ENCODE measurements at regions of chr1 and their contacts with region 1.

Region 1: DNA sequence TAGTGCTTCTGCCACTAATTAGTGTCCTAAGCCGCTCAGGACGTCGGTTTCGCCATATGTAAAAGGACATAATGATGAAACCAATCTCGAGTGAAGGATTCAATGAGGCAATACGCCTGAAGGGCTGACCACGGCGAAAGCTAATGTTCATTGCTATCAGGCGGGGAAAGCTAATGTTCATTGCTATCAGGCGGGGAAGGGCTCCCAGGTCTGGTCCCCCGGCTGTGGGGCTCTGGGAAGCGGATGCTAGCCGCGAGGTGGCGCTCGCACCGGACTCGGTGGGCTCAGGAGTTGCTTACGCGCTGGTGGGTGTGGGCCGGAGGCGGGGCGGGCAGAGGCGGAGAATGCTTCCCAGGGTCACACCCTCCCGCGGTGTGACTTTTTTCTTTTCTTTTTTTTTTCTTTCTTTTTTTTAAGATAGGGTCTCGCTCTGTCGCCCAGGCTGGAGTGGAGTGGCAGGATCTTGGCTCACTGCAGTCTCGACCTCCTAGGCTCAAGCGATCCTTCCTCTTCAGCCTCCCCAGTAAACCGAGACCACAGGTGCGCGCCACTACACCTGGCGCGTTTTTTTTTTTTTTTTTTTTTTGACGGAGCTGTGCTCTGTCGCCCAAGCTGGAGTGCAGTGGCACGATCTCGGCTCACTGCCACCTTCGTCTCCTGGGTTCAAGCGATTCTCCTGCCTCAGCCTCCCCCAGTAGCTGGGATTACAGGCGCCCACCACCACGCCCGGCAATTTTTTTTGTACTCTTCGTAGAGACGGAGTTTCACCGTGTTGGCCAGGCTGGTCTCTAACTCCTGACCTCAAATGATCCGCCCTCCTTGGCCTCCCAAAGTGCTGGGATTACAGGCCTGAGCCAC is 1.1 kb upstream of the PEAR1 start:
- DNase-seq: peak; percentile 91 to 96 (median 93)
- H3K4me3 ChIP-seq: peak overlapping the region in 5 of 7 experiments; percentile 38 to 78 (median 66)
- H3K27ac ChIP-seq: peak overlapping the region in 1 of 2 experiments; percentile 62
- H3K4me1 ChIP-seq: peaks cover 6 to 44% (median 42%) of the 10 kb centered on the region in 4 experiments
- H3K27me3 ChIP-seq: peaks cover 0 to 20% (median 9%) of the 10 kb centered on the region in 5 experiments

Region 2: DNA sequence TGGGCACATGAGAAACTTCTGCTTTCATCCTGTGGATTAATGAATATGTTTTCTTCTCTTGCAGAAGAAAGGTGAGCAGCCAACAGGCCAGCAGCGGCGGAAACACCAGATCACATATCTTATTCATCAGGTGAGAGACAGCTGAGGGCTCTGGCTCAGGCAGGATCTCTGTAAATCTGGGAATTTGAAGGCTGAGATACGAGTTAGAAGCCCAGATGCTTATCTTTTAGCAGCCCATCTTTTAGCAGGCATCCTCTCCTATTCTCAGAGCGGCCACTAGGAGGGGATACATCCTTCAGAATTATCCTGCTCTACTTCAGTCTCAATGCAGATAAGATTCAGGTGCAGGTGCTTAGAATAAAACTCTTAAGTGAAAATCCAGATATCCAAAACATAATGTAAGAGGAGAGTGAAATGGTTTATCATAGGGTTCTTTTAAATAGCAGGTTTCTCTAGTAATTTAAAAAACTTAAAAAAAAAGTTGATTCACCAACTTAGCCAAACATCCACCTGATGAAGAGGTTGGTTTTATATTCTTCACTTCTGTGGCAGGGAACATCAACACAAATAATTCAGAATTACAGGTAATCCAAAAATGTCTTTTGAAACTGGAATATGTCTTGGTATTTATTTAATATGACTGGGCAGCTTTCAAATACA is 95.1 kb before region 1 on chr1:
- CTCF ChIA-PET with region 1: interaction called, 104 read pairs
- POLR2A ChIA-PET with region 1: no interaction called
- DNase-seq: peak; percentile 68 to 77 (median 76)
- H3K4me3 ChIP-seq: no peak overlapping the region
- H3K27ac ChIP-seq: no peak overlapping the region
- H3K4me1 ChIP-seq: peaks cover 0 to 7% (median 5%) of the 10 kb centered on the region in 4 experiments
- H3K27me3 ChIP-seq: no peaks in the 10 kb centered on the region

Region 3: GRCh38 chr1:156860113-156860627 is 32.2 kb before region 1 on chr1:
- CTCF ChIA-PET with region 1: interaction called, 61 read pairs
- POLR2A ChIA-PET with region 1: no interaction called
- DNase-seq: peak; percentile 31 to 61 (median 57)
- H3K4me3 ChIP-seq: peak overlapping the region; percentile 22 to 69 (median 54)
- H3K27ac ChIP-seq: no peak overlapping the region
- H3K4me1 ChIP-seq: peaks cover 2 to 43% (median 39%) of the 10 kb centered on the region in 4 experiments
- H3K27me3 ChIP-seq: peaks cover 0 to 78% (median 47%) of the 10 kb centered on the region in 5 experiments

Region 4: GRCh38 chr1:156876281-156876680 is 16.1 kb before region 1 on chr1:
- CTCF ChIA-PET with region 1: interaction called, 75 read pairs
- POLR2A ChIA-PET with region 1: no interaction called
- DNase-seq: no peak
- H3K4me3 ChIP-seq: no peak overlapping the region
- H3K27ac ChIP-seq: no peak overlapping the region
- H3K4me1 ChIP-seq: no peaks in the 10 kb centered on the region
- H3K27me3 ChIP-seq: peaks cover 0 to 29% (median 10%) of the 10 kb centered on the region in 5 experiments

Region 5: GRCh38 chr1:156927215-156928042 is 35.0 kb after region 1 on chr1:
- CTCF ChIA-PET with region 1: interaction called, 201 read pairs
- POLR2A ChIA-PET with region 1: interaction called, 4 read pairs
- DNase-seq: peak; percentile 77 to 82 (median 81)
- H3K4me3 ChIP-seq: peak overlapping the region in 5 of 7 experiments; percentile 9 to 71 (median 53)
- H3K27ac ChIP-seq: no peak overlapping the region
- H3K4me1 ChIP-seq: peaks cover 0 to 51% (median 33%) of the 10 kb centered on the region in 4 experiments
- H3K27me3 ChIP-seq: peaks cover 1 to 63% (median 33%) of the 10 kb centered on the region in 5 experiments